ENCODE measurements at regions of chr16 and their contacts with region 1.

Region 1: DNA sequence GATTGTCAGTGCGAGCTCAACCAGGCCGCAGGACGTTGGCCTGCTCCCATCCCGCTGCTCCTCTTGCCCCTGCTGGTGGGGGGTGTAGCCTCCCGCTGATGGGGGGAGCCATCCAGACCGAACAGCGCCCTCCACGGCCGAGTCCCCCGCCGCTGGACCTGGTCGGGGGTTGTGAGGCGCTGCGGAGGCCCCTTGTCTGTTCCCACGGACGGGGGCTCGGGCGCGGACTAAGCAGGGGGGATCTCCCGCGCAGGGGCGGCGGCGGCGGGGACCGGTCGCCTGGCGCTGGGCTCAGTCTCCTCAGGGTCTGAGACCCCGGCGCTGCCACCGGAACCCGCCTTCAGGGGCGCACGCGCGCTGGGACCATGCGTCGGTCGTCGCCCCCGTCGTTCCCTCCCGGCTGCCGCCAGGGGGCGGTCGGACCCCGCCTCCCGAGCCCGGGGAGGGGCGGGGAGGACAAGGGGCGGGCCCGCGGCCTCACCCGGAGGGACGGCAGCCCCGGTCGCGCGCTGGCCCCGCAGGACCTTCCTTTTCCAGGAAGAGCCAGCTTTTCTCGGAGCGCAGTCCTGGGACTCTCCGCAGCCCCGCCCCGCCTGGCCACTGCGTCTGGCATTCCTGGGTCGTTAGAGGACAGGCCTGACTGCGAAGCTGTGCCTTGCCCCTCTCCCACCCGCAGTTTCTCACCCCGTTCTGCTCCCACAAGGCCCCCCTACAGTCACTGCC is 6.3 kb upstream of the IL32 start:
- DNase-seq: peak; percentile 94
- ATAC-seq: peak; percentile 79
- H3K4me3 Mint-ChIP-seq: peak overlapping the region; percentile 76
- H3K27ac Mint-ChIP-seq: peak overlapping the region; percentile 79; the same call in 1 of the 2 replicates
- H3K4me1 Mint-ChIP-seq: peaks cover 28% of the 10 kb centered on the region
- H3K27me3 Mint-ChIP-seq: peaks cover 3% of the 10 kb centered on the region; the same call in 1 of the 2 replicates
- CTCF ChIP-seq: peak; percentile 92

Region 2: DNA sequence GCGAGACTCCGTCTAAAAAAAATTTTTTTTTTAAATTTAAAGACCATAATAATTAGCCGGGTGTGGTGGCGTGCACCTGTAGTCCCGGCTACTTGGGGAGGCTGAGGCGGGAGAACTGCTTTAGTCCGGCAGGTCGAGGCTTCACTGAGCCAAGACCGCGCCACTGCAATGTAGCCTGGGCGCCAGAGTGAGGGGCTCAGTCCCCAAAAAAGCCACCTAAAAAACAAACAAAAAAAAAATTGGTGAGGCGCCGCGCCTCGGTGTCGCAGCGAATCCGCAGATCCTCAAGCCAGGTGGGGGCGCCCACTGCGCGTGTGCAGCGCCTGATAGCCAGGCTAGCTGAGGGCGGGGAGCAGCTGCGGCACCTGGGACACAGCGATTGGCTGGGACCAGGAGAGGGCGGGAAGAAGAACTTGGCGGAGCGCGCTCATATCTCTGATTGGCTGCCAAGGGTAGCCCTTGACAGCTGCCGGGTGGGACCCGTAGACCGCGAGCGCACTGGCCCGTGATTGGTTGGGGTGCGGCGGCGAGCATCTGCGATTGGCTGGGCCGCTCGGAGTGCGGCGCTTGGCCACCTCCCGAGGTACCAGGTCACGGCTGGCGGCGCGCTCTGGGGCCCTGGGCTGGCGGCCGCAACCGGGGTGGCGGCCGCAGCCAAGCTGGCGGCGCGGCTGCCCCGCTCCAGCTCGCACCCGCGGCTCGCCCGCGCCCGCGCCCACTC is 55.4 kb before region 1 on chr16:
- CTCF ChIA-PET with region 1: interaction called, 21 read pairs
- POLR2A ChIA-PET with region 1: interaction called, 5 read pairs
- DNase-seq: peak; percentile 99
- ATAC-seq: peak; percentile 85
- H3K4me3 Mint-ChIP-seq: peak overlapping the region; percentile 42
- H3K27ac Mint-ChIP-seq: no peak overlapping the region
- H3K4me1 Mint-ChIP-seq: peaks cover 37% of the 10 kb centered on the region
- H3K27me3 Mint-ChIP-seq: no peaks in the 10 kb centered on the region
- CTCF ChIP-seq: no peak

Region 3: DNA sequence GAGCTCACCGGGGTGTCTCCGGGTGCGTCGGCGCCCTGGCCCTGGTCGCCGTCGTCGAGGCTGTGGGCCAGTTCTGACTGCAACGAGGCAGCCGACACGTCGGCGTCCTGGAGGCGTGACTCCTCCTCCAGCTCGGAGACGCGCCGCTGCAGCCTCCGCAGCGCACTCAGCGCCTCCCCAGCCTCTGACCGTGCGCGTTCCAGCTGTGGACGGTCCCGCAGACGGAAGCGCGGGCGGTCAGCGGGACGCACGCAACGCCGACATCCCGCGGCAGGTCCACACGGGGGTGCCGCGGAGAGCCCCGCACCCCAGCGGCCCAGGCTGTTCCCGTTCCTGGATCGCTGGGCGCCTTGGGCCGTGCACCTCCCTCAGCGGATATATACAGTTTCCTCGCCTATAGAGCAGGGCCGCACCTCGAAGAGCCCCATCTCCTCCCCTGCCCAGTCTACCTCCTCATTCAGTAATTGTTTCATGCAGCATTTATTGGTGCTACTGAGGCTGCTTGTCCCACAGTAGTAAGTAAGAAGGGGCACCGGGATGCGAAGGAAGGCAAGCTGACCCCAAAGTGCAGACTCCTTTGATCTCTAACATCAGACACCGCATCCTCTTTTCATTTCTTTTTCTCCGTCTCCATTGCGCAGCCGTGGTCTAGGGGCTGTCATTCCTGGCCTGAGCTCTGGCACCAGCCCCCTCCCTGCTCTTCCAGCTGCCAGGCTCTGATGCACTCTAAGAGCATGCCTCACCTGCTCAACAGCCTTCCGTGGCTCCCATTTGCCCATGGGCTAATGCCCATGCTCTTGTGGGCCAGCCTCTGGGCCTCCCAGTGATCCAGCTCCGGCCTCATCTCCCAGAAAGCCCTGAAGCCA is 29.4 kb before region 1 on chr16:
- CTCF ChIA-PET with region 1: interaction called, 109 read pairs
- POLR2A ChIA-PET with region 1: interaction called, 9 read pairs
- DNase-seq: no peak
- ATAC-seq: no peak
- H3K4me3 Mint-ChIP-seq: no peak overlapping the region
- H3K27ac Mint-ChIP-seq: no peak overlapping the region
- H3K4me1 Mint-ChIP-seq: peaks cover 22% of the 10 kb centered on the region
- H3K27me3 Mint-ChIP-seq: no peaks in the 10 kb centered on the region
- CTCF ChIP-seq: no peak

Region 4: GRCh38 chr16:3074860-3075522 is 15.8 kb after region 1 on chr16:
- CTCF ChIA-PET with region 1: interaction called, 59 read pairs
- POLR2A ChIA-PET with region 1: interaction called, 5 read pairs
- DNase-seq: no peak
- ATAC-seq: no peak
- H3K4me3 Mint-ChIP-seq: no peak overlapping the region
- H3K27ac Mint-ChIP-seq: no peak overlapping the region
- H3K4me1 Mint-ChIP-seq: peaks cover 57% of the 10 kb centered on the region
- H3K27me3 Mint-ChIP-seq: peaks cover 12% of the 10 kb centered on the region
- CTCF ChIP-seq: no peak

Region 5: GRCh38 chr16:3099732-3100499 is 40.8 kb after region 1 on chr16:
- CTCF ChIA-PET with region 1: interaction called, 64 read pairs
- POLR2A ChIA-PET with region 1: interaction called, 29 read pairs
- DNase-seq: peak; percentile 95
- ATAC-seq: peak; percentile 42
- H3K4me3 Mint-ChIP-seq: peak overlapping the region; percentile 93
- H3K27ac Mint-ChIP-seq: peak overlapping the region; percentile 99
- H3K4me1 Mint-ChIP-seq: peaks cover 61% of the 10 kb centered on the region
- H3K27me3 Mint-ChIP-seq: no peaks in the 10 kb centered on the region; the same call in 1 of the 2 replicates
- CTCF ChIP-seq: no peak

Region 6: GRCh38 chr16:3123986-3124886 is 65.1 kb after region 1 on chr16:
- CTCF ChIA-PET with region 1: interaction called, 79 read pairs
- POLR2A ChIA-PET with region 1: interaction called, 6 read pairs
- DNase-seq: peak; percentile 99
- ATAC-seq: peak; percentile 89
- H3K4me3 Mint-ChIP-seq: peak overlapping the region; percentile 88
- H3K27ac Mint-ChIP-seq: peak overlapping the region; percentile 96
- H3K4me1 Mint-ChIP-seq: peaks cover 37% of the 10 kb centered on the region
- H3K27me3 Mint-ChIP-seq: no peaks in the 10 kb centered on the region
- CTCF ChIP-seq: no peak

Region 7: DNA sequence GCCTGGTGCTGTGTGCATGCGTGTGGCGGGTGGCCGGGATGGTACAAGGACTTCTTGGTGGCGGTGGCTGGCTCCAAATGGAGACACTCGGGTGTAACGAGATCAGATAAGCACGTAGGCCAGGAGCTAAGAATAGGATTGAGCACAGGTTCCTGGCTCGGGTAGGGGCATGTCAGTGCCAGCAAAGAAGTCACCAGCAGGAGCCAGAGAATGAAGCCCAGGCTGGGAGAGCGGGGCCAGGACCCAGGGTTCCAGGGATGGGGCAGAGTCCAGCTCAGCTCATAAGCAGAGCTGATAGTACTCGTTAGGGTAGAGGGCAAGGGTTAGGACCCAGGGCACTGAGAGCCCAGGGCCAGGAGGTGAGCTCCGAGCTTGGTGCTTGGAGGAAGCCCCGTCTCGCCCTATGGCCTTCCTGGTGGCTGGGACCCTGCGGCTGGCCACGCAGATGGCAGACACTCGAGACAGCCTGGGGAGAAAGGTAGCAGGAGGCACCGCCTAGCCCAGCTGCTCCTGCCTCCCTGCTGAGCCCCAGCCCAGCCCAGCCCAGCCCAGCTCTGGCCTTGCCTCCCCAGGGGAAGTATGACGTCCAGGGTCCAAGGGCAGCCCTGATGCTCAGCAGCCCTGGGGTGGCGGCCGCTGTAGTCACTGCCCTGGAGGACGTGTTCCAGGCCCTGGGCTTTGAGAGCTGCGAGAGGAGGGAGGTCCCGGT is 84.6 kb after region 1 on chr16:
- CTCF ChIA-PET with region 1: interaction called, 14 read pairs
- POLR2A ChIA-PET with region 1: no interaction called
- DNase-seq: no peak
- ATAC-seq: no peak
- H3K4me3 Mint-ChIP-seq: no peak overlapping the region
- H3K27ac Mint-ChIP-seq: no peak overlapping the region; the same call in 1 of the 2 replicates
- H3K4me1 Mint-ChIP-seq: no peaks in the 10 kb centered on the region
- H3K27me3 Mint-ChIP-seq: peaks cover 11% of the 10 kb centered on the region
- CTCF ChIP-seq: no peak